CD14-positive monocyte (primary cell): ENCODE measurements at regions of chr14 and their contacts with region 1.

Region 1: DNA sequence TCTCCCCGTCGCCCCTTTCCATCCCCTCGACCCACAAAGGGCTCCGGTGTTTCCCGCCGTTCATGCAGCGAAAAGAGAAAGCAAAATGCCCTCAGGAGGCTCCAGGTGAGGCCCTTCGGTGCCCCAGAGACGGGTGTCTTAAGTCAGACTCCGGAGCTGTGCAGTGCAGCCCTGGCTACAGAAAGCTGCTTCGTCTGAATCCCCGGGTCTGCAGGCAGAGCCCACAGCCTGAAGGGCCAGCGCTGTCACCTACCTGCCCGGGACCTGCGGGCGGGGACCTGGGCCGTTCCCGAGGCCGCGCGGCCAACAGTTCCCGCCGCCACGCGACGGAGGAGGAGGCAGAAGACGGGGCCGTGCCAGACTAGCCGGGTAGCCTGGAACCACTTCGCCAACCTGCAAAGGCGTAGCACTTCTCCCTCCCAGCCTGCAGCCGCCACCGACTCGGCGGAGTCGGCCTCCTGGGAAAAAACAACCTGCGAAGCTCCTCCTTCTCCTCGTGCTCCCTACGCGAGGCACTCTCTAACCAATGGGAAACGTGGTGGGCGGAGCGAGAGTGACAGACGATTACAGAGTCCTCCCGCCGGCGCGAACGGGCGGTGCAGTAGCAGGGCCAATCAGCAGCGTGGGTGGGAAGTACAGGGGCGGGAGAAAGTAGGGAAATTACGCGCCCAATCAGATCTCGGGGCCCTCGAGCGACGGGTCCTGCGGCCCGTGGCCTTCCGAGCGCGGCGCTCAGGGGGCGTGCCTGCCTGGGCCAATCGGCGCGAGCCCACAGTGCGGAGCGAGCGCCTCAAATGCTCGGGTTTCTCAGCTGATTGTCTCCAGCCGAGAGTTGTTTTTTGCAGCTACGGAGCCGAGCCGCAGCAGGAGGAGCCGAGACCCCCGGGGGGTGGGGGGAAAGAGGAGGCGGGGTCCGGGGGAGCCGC is at the starts of genes GPR137C and TXNDC16:
- DNase-seq: peak; percentile 99 to 100 (median 99)
- H3K4me3 ChIP-seq: peak within 1 kb of the TSS; percentile 71 to 91 (median 78)
- H3K4me3 Mint-ChIP-seq: peak within 1 kb of the TSS; percentile 94
- H3K27ac ChIP-seq: peak within 1 kb of the TSS; percentile 76 to 81
- H3K27ac Mint-ChIP-seq: peak within 1 kb of the TSS; percentile 79 to 96 (median 92)
- H3K4me1 ChIP-seq: peaks cover 20 to 30% of the 10 kb centered on the region in 2 donors
- H3K4me1 Mint-ChIP-seq: peaks cover 26% of the 10 kb centered on the region
- H3K27me3 ChIP-seq: peaks cover 2 to 3% of the 10 kb centered on the region in 2 donors
- H3K27me3 Mint-ChIP-seq: peaks cover 0 to 6% (median 2%) of the 10 kb centered on the region in 3 donors
- CTCF ChIP-seq: no peak
- polyA plus RNA-seq, gene GPR137C: 0.04 TPM in 1 of 3 donors, not detected in the others
- polyA plus RNA-seq, gene TXNDC16: 2.6 to 4.1 (median 3.8) TPM

Region 2: DNA sequence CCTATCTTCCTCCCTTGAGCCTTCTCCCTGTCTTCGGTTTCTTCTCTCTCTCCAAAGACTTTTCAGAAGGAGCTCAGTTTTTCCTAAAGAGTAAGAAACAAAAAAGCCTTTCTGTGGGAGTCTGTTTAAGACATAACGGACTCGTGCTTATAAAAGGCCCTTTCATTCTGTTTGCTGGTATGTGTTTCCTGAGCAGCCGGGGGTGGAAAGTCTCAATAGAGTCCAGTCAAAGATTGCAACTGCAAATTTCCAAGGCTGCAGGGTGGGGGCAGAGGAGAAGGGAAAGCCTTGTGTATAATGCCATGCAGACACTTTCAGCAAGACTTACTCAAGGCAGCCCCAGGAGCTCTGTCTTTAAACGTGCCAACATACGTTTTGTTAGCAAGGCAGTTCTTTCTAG is 629.7 kb before region 1 on chr14:
- intact Hi-C with region 1: no loop called
- DNase-seq: no peak
- H3K4me3 ChIP-seq: no peak overlapping the region
- H3K4me3 Mint-ChIP-seq: no peak overlapping the region
- H3K27ac ChIP-seq: no peak overlapping the region
- H3K27ac Mint-ChIP-seq: peak overlapping the region in 1 of 7 donors; percentile 35
- H3K4me1 ChIP-seq: no peaks in the 10 kb centered on the region
- H3K4me1 Mint-ChIP-seq: peaks cover 9% of the 10 kb centered on the region
- H3K27me3 ChIP-seq: no peaks in the 10 kb centered on the region
- H3K27me3 Mint-ChIP-seq: peaks cover 0 to 4% (median 0%) of the 10 kb centered on the region in 3 donors
- CTCF ChIP-seq: no peak

Region 3: DNA sequence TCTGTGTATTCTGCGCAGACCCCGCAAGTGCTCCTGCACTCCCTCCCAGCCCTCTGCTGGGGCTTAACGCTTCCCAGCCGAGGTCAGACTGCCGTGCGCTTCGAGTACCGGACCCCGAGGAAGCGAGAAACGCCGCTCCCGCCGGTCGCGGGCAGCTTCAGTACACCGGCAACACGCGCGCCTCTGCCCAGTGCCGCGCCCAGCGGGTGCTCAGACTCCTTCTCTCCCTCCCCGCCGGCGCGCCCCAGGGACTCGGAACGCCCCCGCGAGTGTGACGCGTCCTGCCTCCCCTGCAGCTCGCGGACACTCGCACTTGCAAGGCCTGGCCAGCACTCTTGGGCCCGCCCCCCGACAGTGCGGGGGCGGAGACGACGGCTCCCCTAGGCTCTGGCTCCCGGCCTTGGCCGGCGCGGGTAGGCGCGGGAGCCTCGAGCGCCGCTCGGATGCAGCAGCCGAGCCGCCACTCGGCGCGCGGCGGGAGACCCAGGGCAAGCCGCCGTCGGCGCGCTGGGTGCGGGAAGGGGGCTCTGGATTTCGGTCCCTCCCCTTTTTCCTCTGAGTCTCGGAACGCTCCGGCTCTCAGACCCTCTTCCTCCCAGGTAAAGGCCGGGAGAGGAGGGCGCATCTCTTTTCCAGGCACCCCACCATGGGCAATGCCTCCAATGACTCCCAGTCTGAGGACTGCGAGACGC is 238.3 kb before region 1 on chr14 and contains the start of gene PTGER2:
- intact Hi-C with region 1: loop called in 1 of 2 experiments (anchors 5 kb)
- DNase-seq: peak; percentile 90 to 96 (median 95)
- H3K4me3 ChIP-seq: peak within 1 kb of the TSS; percentile 62 to 85 (median 85)
- H3K4me3 Mint-ChIP-seq: peak within 1 kb of the TSS; percentile 99 to 100
- H3K27ac ChIP-seq: peak within 1 kb of the TSS; percentile 87 to 97
- H3K27ac Mint-ChIP-seq: peak within 1 kb of the TSS; percentile 99 to 100 (median 99)
- H3K4me1 ChIP-seq: peaks cover 79 to 83% of the 10 kb centered on the region in 2 donors
- H3K4me1 Mint-ChIP-seq: peaks cover 79% of the 10 kb centered on the region
- H3K27me3 ChIP-seq: no peaks in the 10 kb centered on the region
- H3K27me3 Mint-ChIP-seq: peaks cover 0 to 5% (median 2%) of the 10 kb centered on the region in 3 donors
- CTCF ChIP-seq: no peak
- polyA plus RNA-seq, gene PTGER2: 51.5 to 90.4 (median 72.8) TPM

Region 4: GRCh38 chr14:52473557-52473956 is 78.8 kb before region 1 on chr14:
- intact Hi-C with region 1: no loop called
- DNase-seq: peak; percentile 15 to 52 (median 36)
- H3K4me3 ChIP-seq: no peak overlapping the region
- H3K4me3 Mint-ChIP-seq: no peak overlapping the region
- H3K27ac ChIP-seq: no peak overlapping the region
- H3K27ac Mint-ChIP-seq: no peak overlapping the region
- H3K4me1 ChIP-seq: no peaks in the 10 kb centered on the region
- H3K4me1 Mint-ChIP-seq: peaks cover 2% of the 10 kb centered on the region
- H3K27me3 ChIP-seq: no peaks in the 10 kb centered on the region
- H3K27me3 Mint-ChIP-seq: peaks cover 0 to 4% (median 2%) of the 10 kb centered on the region in 3 donors
- CTCF ChIP-seq: peak; percentile 62

Region 5: DNA sequence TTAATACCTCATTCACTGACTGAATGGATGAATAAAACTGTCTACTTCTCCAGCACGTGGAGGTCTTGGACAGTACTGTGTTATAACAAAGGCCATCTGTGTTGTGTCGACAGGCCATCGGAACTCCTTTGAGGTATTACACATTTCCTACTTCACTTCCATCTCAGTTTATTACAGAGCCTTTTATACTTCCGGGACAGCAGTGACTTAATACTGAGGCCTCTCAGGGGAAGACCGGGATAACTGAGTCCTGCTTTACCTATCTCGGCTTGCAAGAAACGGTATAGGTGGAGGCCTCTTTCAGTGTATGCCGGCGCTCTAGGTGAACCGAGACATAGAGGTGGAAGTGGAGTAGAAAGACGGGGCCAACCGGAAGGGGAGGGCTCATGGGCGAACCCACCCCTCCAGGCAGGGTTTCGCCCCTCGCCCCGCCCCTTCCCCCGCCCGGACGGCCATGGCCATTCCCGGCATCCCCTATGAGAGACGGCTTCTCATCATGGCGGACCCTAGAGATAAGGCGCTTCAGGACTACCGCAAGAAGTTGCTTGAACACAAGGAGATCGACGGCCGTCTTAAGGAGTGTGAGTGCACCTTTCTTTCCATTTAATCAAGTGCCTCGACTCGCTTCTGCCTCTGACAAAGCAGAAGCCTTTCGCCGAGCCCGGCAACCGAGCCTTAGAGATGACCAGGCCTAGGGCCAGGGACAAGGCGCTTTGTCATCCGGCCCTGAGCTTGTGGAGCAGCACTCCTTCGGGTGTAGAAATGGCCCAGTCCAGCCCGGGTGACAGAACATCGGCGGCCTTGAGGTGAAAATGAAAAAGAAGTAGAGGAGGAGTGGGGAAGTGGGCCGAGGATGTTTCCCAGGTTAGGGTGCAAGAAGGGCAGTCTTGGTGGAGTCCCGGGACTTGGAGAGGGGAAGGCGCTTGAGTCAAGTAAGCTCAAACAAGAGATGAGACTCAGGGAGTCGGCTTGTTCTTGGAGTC is 154.7 kb after region 1 on chr14 and contains the start of gene PSMC6:
- intact Hi-C with region 1: loop called in 1 of 2 experiments (anchors 10 kb)
- DNase-seq: peak; percentile 83 to 89 (median 85)
- H3K4me3 ChIP-seq: peak within 1 kb of the TSS; percentile 69 to 99 (median 93)
- H3K4me3 Mint-ChIP-seq: peak within 1 kb of the TSS; percentile 99 to 100
- H3K27ac ChIP-seq: peak within 1 kb of the TSS; percentile 90 to 96
- H3K27ac Mint-ChIP-seq: peak within 1 kb of the TSS; percentile 96 to 99 (median 98)
- H3K4me1 ChIP-seq: peaks cover 25 to 48% of the 10 kb centered on the region in 2 donors
- H3K4me1 Mint-ChIP-seq: peaks cover 38% of the 10 kb centered on the region
- H3K27me3 ChIP-seq: no peaks in the 10 kb centered on the region
- H3K27me3 Mint-ChIP-seq: peaks cover 0 to 2% (median 0%) of the 10 kb centered on the region in 3 donors
- CTCF ChIP-seq: no peak
- polyA plus RNA-seq, gene PSMC6: 46.9 to 64.3 (median 48.6) TPM

Region 6: GRCh38 chr14:52729925-52730667 is 177.8 kb after region 1 on chr14 and contains the start of gene STYX:
- intact Hi-C with region 1: loop called in 1 of 2 experiments (anchors 10 kb)
- DNase-seq: peak; percentile 93 to 97 (median 94)
- H3K4me3 ChIP-seq: peak within 1 kb of the TSS; percentile 78 to 98 (median 94)
- H3K4me3 Mint-ChIP-seq: peak within 1 kb of the TSS; percentile 94 to 95
- H3K27ac ChIP-seq: peak within 1 kb of the TSS; percentile 71 to 87
- H3K27ac Mint-ChIP-seq: peak within 1 kb of the TSS; percentile 89 to 96 (median 91)
- H3K4me1 ChIP-seq: peaks cover 19 to 22% of the 10 kb centered on the region in 2 donors
- H3K4me1 Mint-ChIP-seq: peaks cover 23% of the 10 kb centered on the region
- H3K27me3 ChIP-seq: no peaks in the 10 kb centered on the region
- H3K27me3 Mint-ChIP-seq: no peaks in the 10 kb centered on the region
- CTCF ChIP-seq: no peak
- polyA plus RNA-seq, gene STYX: 7.3 to 16.7 (median 12.0) TPM

Region 7: GRCh38 chr14:52791203-52792096 is 239.1 kb after region 1 on chr14 and contains the start of gene GNPNAT1:
- intact Hi-C with region 1: loop called in 1 of 2 experiments (anchors 10 kb)
- DNase-seq: peak; percentile 73 to 78 (median 73)
- H3K4me3 ChIP-seq: peak within 1 kb of the TSS; percentile 57 to 90 (median 84)
- H3K4me3 Mint-ChIP-seq: peak within 1 kb of the TSS; percentile 92 to 94
- H3K27ac ChIP-seq: peak within 1 kb of the TSS; percentile 24 to 64
- H3K27ac Mint-ChIP-seq: peak within 1 kb of the TSS; percentile 71 to 92 (median 82)
- H3K4me1 ChIP-seq: peaks cover 14 to 24% of the 10 kb centered on the region in 2 donors
- H3K4me1 Mint-ChIP-seq: peaks cover 18% of the 10 kb centered on the region
- H3K27me3 ChIP-seq: no peaks in the 10 kb centered on the region
- H3K27me3 Mint-ChIP-seq: peaks cover 1 to 12% (median 2%) of the 10 kb centered on the region in 3 donors
- CTCF ChIP-seq: no peak
- polyA plus RNA-seq, gene GNPNAT1: 1.1 to 3.1 (median 1.9) TPM

Region 8: DNA sequence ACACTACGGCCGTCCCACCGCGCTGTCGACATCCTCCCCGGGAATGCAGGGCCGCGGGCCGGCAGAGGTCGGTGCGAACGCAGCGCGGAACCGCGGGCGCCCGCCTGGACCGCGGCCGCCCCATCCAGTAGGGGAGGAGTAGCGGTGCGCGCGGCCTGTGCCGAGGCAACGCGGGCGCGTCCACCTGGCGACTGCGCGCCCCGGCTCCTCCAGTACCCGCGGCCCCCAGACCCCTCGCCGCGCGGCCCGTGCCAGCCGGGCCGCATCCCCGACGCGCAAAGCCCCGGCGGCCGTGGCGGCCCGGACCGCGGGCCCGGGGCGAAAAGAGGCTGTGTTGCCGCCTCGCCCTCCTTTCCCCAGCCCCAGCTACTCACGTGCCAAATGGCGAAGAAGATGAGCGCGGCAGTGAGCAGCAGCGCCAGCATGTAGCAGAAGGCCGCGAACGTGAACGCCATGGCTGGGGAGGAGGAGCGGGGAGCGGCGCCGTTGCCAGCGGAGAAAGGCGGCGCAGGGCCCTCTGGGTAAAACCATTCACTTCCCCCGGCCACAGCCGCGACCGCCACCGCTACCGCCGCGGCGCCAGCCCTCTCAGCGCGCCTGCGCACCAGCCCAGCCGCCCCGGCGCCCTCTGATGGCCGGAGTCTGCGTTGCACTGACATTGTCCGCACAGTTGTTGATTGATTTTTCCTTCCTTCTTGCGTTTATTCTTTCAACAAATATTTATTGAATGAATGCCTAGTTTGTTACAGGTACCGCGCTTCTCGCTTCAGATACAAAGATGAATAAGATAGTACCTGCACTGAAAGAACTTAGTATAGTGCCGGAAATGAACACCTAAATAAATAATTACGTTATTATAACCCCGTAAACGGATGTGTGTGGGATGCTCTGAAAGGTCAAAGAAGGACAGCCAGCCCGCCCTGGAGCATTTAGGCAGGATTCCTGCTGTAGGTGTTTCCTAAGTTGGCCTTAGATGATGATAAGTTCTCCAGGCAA is 1888.8 kb after region 1 on chr14 and contains the start of gene CNIH1:
- intact Hi-C with region 1: loop called in 1 of 2 experiments (anchors 5 kb)
- DNase-seq: peak; percentile 89 to 91 (median 90)
- H3K4me3 ChIP-seq: peak within 1 kb of the TSS; percentile 55 to 90 (median 77)
- H3K4me3 Mint-ChIP-seq: peak within 1 kb of the TSS; percentile 76 to 92
- H3K27ac ChIP-seq: peak within 1 kb of the TSS; percentile 83 to 86
- H3K27ac Mint-ChIP-seq: peak within 1 kb of the TSS; percentile 83 to 92 (median 87)
- H3K4me1 ChIP-seq: peaks cover 22 to 32% of the 10 kb centered on the region in 2 donors
- H3K4me1 Mint-ChIP-seq: peaks cover 41% of the 10 kb centered on the region
- H3K27me3 ChIP-seq: no peaks in the 10 kb centered on the region
- H3K27me3 Mint-ChIP-seq: no peaks in the 10 kb centered on the region
- CTCF ChIP-seq: peak; percentile 92
- polyA plus RNA-seq, gene CNIH1: 109 to 162 (median 138) TPM